Astrocyte of the cerebellum (primary cell): ENCODE measurements at regions of chr3 and their contacts with region 1.

Region 1: DNA sequence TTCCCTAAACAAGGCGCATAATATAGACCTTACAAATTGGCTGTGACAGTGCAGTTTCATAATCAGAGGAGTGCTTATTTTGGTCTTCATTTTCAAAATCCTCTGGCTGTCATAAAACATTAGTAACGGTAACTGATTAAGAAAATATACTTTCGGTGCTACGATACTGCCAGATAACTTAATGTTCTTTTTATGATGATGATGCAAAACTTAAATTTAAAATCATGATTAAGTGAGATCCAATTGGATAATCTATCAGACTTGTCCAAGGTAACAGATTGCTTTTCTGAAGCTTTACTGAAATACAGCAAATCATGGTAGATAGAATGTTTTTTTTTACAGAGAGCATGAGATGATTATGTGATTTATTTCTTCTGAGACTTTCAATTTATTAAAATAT is 364.2 kb upstream of the CNTN3 start:
- DNase-seq: no peak
- H3K4me3 ChIP-seq: no peak overlapping the region
- CTCF ChIP-seq: no peak

Region 2: DNA sequence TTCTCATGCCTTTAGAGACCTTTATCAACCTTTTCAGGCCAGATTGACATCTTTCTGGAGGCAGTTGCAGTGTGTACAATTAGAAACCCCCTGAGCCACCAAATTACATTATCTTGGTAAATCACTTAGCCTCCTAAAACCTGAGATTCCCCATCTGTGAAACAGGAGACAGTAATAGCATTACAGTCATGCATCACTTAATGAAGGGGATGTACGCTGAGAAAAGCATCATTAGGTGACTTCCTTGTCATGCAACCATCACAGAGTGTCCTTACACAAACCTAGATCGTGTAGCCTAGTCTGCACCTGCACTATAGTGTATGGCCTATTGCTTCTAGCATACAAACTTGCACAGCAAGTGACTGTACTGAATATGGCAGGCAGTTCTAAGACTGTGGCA is 36.6 kb after region 1 on chr3:
- in situ Hi-C with region 1: loop called (anchors 5 kb)
- DNase-seq: no peak
- H3K4me3 ChIP-seq: no peak overlapping the region
- CTCF ChIP-seq: no peak

Region 3: DNA sequence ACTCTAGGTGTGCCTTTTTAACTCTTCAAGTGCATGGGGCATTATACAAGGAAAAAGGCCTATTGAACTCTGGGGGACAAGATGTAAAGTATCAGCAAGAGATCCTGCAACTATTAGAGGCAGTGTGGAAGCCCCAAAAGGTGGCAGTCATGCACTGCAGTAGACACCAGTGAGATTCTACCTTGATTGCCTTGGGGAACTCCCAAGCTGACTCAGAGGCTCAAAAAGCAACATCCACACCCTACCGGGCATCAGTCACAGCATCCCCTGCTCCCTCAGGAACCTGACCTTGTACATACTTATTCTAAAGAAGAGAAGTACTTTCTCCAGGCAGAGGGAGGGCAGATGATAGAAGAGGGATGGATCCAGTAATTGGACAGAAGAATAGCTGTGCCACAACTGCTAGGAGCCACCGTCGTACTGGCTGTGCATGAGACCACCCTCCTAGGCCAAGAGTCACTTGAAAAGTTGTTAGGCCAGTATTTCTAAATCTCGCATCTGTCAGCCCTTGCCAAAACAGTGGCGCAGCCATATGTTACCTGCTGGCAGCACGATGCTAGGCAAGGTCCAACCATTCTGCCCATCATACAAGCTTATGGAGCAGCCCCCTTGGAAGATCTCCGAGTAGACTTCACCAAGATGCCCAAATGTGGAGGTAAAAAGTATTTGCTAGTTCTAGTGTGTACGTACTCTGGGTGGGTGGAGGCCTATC is 162.4 kb after region 1 on chr3:
- in situ Hi-C with region 1: no loop called
- DNase-seq: no peak
- H3K4me3 ChIP-seq: no peak overlapping the region
- CTCF ChIP-seq: no peak

Region 4: GRCh38 chr3:75303741-75304140 is 325.1 kb after region 1 on chr3:
- in situ Hi-C with region 1: no loop called
- DNase-seq: no peak
- H3K4me3 ChIP-seq: no peak overlapping the region
- CTCF ChIP-seq: no peak